ENCODE measurements at regions of chr12 and their contacts with region 1.

Region 1: DNA sequence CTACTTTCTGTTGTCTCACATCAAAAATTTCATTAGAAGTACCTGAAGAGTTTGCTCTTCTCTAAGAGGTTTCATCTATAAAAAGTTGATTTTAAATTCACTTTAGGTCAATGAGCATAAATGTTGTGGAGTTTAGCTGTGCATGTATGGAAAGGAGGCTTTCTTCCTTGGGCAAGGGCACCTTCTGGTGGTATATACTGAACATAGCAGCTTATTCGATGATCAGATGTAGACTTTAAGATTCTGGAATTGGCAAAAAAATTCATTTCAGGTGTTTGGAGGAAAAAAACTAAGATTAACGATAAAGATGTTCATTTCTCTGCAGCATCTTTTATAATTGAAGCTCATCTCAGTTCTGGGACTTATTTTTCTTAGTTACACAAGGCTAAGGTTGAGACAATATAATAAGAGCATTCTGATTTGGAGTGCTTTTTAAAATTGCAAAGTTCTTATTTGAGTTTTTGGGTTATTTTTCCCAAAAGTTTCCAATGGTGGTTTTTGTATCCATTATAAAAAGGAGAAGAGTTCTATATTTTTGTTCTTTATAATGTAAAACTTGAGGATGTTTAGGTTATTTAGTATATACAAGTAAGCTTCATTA is 46.8 kb downstream of the TMEM117 start:
- DNase-seq: no peak
- ATAC-seq: peak; percentile 71 to 89 (median 76)
- H3K4me3 ChIP-seq: no peak overlapping the region
- H3K27ac ChIP-seq: no peak overlapping the region
- H3K4me1 ChIP-seq: peaks cover 25% of the 10 kb centered on the region
- H3K27me3 ChIP-seq: no peaks in the 10 kb centered on the region
- CTCF ChIP-seq: peak; percentile 85

Region 2: GRCh38 chr12:43444940-43445564 is 437.6 kb before region 1 on chr12:
- intact Hi-C with region 1: loop called in 1 of 2 experiments (anchors 10 kb)
- DNase-seq: no peak
- ATAC-seq: no peak
- H3K4me3 ChIP-seq: no peak overlapping the region
- H3K27ac ChIP-seq: no peak overlapping the region
- H3K4me1 ChIP-seq: no peaks in the 10 kb centered on the region
- H3K27me3 ChIP-seq: no peaks in the 10 kb centered on the region
- CTCF ChIP-seq: peak; percentile 65

Region 3: DNA sequence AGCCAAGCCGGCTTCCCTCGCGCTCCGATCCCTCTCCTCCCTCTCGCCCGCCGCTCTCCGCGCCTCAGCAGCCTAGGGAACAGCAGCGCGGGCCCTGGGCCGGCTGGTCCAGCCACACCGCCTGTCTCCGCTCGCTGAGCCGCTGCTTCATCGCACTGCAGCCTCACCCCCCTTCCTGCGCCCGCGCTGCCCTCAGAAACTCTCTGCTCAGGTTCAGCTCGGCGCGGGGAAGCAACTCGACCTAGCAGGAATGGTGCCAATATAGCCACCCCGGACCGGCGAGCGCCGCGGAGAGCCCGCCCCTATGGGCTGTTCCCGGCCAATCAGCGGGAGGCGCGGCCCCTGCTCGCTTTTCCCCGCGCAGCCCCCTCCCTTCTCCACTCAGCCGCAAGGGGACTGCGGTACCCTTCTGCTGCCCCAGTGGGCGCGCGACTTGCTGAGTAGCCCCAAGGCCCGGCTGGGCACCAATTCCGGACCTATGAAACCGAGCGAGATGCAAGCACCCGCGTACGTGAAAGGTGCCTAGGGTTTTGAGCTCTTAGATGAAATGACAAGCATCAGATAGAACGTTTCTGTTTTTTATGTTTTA is 330.6 kb before region 1 on chr12 and contains the start of gene ADAMTS20:
- intact Hi-C with region 1: no loop called
- DNase-seq: no peak
- ATAC-seq: peak in 2 of 4 donors; percentile 13 to 33
- H3K4me3 ChIP-seq: peak within 1 kb of the TSS; percentile 46
- H3K27ac ChIP-seq: no peak within 1 kb of the TSS
- H3K4me1 ChIP-seq: no peaks in the 10 kb centered on the region
- H3K27me3 ChIP-seq: peaks cover 0 to 25% (median 13%) of the 10 kb centered on the region in 3 donors
- CTCF ChIP-seq: no peak
- total RNA-seq, gene ADAMTS20: not detected

Region 4: DNA sequence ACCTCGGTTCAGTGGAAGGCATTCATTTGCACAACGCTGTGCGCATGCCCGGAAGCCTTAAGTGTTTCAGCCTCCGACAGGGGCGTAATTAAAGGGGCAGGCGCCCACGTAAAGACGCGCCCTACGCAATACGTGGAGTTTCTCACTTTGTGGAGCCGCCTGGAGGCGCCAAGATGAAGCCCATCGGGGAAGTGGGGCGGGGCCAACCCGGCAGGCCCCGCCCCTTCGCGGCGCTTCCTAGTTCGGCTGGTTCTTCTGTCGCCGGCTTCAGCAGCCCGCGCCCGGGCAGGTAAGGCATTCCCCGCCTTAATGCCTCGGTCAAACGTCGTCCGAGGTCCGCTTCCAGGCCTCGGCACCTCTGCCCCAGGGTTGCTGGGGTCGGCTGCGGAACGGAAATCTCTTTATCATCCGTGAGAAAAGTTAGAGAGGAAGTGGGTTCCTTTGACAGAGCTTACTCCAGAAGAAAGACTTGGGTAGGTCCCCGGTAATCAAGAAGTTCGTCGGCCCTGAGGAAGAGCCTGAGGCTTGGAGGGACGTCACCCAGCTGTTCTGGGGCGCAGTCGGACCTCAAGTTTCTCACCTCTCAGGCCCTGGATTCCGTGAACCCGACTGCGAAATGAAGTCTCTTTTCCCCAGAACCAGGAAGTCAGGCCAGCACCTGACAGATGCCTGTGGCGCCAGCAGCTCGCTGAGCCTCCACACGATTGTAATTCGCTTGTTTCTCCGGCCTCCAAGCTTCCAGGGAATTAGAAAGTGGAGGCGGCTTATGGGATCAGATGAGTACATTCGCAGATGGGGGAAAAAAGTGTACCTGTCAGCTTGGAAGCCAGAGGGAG is 123.7 kb before region 1 on chr12 and contains the starts of genes IRAK4 and PUS7L:
- intact Hi-C with region 1: loop called in 1 of 2 experiments (anchors 5 kb)
- DNase-seq: peak; percentile 95 to 97
- ATAC-seq: peak; percentile 99 to 100 (median 100)
- H3K4me3 ChIP-seq: peak within 1 kb of the TSS; percentile 88
- H3K27ac ChIP-seq: peak within 1 kb of the TSS; percentile 88
- H3K4me1 ChIP-seq: peaks cover 24% of the 10 kb centered on the region
- H3K27me3 ChIP-seq: no peaks in the 10 kb centered on the region
- CTCF ChIP-seq: peak; percentile 46
- total RNA-seq, gene IRAK4: 3.0 to 4.7 (median 3.5) TPM
- total RNA-seq, gene PUS7L: 2.8 to 4.7 (median 4.0) TPM

Region 5: DNA sequence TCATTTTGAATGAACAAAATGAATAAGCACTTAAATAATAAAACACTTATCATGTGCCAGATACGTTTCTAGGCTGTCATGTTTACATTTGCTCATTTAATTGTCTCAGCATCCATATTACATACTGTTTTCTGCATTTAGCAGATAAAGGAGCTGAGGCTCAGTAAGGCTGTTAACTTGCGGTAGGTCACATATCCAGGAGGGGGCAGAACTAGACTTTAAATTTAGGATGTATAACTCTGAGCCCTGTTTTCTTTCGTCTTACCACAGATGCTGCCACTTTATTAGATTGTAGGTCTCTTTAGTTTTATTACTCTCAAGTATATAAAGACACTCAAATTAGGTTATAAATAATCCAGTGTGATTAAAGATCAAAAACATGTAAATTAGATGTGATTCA is 106.2 kb before region 1 on chr12:
- intact Hi-C with region 1: loop called (anchors 5 to 10 kb)
- DNase-seq: no peak
- ATAC-seq: no peak
- H3K4me3 ChIP-seq: no peak overlapping the region
- H3K27ac ChIP-seq: no peak overlapping the region
- H3K4me1 ChIP-seq: no peaks in the 10 kb centered on the region
- H3K27me3 ChIP-seq: no peaks in the 10 kb centered on the region
- CTCF ChIP-seq: peak; percentile 42

Region 6: GRCh38 chr12:44748950-44749468 is 866.3 kb after region 1 on chr12:
- intact Hi-C with region 1: no loop called
- DNase-seq: no peak
- ATAC-seq: no peak
- H3K4me3 ChIP-seq: no peak overlapping the region
- H3K27ac ChIP-seq: no peak overlapping the region
- H3K4me1 ChIP-seq: no peaks in the 10 kb centered on the region
- H3K27me3 ChIP-seq: no peaks in the 10 kb centered on the region
- CTCF ChIP-seq: no peak